ENCODE measurements at regions of chr14 and their contacts with region 1.

Region 1: DNA sequence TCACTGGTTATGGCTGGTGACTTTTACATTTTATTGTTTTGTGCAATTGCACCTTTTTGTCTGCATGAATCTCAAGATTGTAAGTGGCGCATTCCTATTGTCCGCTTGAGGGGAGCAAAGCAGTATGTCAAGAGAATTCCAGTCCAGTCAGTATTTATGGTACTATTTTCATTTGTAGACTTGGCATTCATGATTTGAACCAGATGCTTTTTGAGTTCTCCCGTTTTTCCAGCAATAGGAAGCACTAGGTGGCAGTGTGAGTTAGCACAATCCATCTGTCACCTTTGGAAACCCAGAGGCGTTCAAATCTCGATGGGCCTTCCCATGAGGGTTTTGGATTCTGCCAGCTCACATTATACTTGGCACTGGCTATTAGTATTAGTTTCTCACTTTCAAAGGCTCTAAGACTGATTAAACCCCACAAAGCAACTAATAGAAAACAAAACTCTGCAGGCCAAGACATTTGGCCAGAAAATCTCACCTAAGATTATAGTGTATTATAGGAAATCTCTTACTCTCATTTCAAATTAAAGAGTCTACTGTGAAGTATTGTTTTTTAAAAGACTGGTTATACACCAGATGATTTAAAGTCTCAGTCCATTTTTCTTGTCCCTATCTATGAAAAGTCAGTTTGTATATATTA is 2.2 kb downstream of the DACT1 start:
- DNase-seq: no peak
- ATAC-seq: peak; percentile 68
- H3K4me3 ChIP-seq: peak overlapping the region; percentile 67
- H3K27ac ChIP-seq: no peak overlapping the region
- H3K4me1 ChIP-seq: peaks cover 16% of the 10 kb centered on the region
- H3K27me3 ChIP-seq: no peaks in the 10 kb centered on the region
- CTCF ChIP-seq: peak; percentile 62

Region 2: DNA sequence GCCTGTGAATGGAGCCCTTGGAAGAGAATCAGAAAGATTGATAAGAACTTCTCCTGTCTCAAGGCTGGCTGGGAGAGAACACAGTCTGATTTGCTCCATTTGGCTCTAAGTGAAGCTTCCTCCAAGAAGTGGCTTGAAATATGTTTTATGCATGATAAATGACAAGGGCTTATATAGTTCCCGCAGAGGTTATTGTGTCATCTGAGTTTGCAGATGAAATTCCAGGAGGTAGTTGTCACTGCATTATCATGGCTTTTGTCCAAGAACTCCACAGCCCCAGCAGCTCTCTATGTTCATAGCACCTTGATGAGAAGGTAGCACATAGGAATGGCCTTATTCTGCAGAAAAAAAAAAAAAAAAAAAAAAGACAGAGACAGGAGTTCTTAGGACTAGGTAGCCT is 106.3 kb after region 1 on chr14:
- intact Hi-C with region 1: no loop called
- DNase-seq: no peak
- ATAC-seq: no peak
- H3K4me3 ChIP-seq: no peak overlapping the region
- H3K27ac ChIP-seq: no peak overlapping the region
- H3K4me1 ChIP-seq: peaks cover 40% of the 10 kb centered on the region
- H3K27me3 ChIP-seq: no peaks in the 10 kb centered on the region
- CTCF ChIP-seq: no peak

Region 3: GRCh38 chr14:59028476-59029202 is 388.7 kb after region 1 on chr14:
- intact Hi-C with region 1: loop called (anchors 10 kb)
- DNase-seq: no peak
- ATAC-seq: peak; percentile 90
- H3K4me3 ChIP-seq: no peak overlapping the region
- H3K27ac ChIP-seq: no peak overlapping the region
- H3K4me1 ChIP-seq: no peaks in the 10 kb centered on the region
- H3K27me3 ChIP-seq: no peaks in the 10 kb centered on the region
- CTCF ChIP-seq: peak; percentile 81

Measured in upper lobe of right lung (tissue), 1 donor.